ENCODE measurements at regions of chr1 and their contacts with region 1.

Region 1: DNA sequence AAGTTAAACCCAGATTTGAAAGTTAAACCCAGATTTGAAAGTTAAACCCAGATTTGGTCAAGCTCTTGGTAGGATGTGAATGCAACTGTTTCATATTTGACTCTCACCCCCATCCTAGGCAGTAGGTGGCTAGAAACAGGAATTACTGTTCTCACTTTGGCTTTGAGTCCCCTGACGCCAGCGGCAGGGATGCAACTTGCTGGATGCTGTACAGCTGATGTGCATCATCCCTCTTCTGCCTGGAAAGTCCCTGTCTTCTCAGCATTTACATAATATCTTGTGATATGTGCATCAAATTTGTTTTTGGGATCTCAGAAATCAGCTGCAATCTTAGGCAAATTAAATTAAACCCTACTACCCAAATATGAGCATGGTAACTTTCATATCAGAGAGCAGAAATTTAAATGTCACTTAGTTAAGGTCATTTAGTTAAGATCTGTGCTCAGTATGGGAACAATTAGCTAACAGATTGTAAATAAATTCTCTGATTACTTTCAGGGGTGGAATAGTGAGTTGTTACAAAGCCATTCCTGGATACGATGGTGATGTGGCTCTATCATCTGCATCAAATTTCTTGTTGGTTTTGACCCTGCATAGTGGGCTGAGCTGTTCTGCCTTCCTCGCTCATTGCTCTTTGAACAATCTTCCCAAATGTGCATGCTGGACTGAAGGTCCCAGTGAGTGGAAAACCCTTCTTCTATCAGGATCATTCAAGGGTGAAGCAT is 6.8 kb upstream of the HAO2 start:
- DNase-seq: no peak
- H3K4me3 ChIP-seq: no peak overlapping the region
- H3K27ac ChIP-seq: no peak overlapping the region
- H3K27me3 ChIP-seq: no peaks in the 10 kb centered on the region
- CTCF ChIP-seq: no peak

Region 2: GRCh38 chr1:119254067-119254720 is 107.6 kb before region 1 on chr1:
- intact Hi-C with region 1: no loop called
- DNase-seq: no peak
- H3K4me3 ChIP-seq: no peak overlapping the region
- H3K27ac ChIP-seq: no peak overlapping the region
- H3K27me3 ChIP-seq: no peaks in the 10 kb centered on the region
- CTCF ChIP-seq: no peak

Region 3: GRCh38 chr1:119286587-119287181 is 75.1 kb before region 1 on chr1:
- intact Hi-C with region 1: loop called in 1 of 2 experiments (anchors 2 kb)
- DNase-seq: no peak
- H3K4me3 ChIP-seq: no peak overlapping the region
- H3K27ac ChIP-seq: no peak overlapping the region
- H3K27me3 ChIP-seq: no peaks in the 10 kb centered on the region
- CTCF ChIP-seq: peak in 53 of 56 donors; percentile 12 to 73 (median 48)

Region 4: DNA sequence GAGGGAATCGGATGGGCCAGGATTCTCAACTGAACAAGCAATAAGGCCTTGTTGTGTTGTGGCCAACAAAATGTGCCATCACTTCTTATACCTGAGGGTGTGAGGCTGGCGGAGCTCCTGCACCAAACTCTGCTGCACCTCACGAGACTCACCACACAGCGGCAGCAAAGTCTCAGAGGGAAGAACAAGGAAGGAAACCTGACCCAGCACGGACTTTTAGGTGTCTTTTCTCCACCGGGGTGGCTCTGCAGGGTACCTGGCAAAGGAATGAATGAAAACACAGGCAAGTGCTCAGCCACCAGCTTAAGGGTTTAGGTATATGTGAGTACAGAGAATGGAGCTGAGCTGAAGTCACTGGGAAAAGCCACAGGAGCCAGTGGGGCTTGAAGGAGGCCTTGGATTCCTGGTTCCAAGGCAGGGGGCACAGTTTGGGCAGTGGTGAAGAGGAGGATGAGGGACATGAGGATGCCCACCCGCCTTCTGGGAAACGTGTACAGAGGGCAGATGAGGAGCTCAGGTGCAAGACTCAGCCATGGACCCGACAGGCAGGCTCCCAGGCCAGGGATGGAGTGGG is 114.2 kb after region 1 on chr1:
- intact Hi-C with region 1: no loop called
- DNase-seq: peak in 7 of 10 donors; percentile 17 to 63 (median 50)
- H3K4me3 ChIP-seq: no peak overlapping the region
- H3K27ac ChIP-seq: no peak overlapping the region
- H3K27me3 ChIP-seq: peaks cover 0 to 4% (median 0%) of the 10 kb centered on the region in 45 donors
- CTCF ChIP-seq: peak in 48 of 56 donors; percentile 16 to 61 (median 42)

Measured in dorsolateral prefrontal cortex (tissue), 120 donors.